Dendritic cell treated with granulocyte-macrophage colony-stimulating factor and Interleukin-4, amounts not matched to agents 40 ng/mL and 50 ng/mL, for 4 days (primary cell): ENCODE measurements at regions of chr4 and their contacts with region 1.

Region 1: DNA sequence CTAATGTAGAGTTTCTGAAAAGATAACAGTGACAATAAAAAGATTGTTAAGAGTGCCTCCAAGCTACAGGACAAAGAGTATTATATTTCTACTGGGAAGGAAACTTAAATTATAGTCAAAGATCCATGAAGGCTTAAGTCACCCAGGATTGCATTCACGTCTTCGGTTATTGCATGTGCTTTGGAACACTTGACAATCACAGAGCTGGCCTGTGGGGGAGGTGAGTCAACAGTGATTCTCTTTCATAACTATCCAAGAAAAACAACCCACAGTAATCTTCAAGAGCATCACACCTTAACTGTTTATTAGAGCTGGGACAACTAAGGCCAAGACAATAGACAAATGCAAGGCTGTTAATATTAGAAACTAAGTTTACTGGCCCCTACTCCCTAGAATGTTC is 40.3 kb downstream of the PDGFC start:
- H3K4me3 Mint-ChIP-seq: no peak overlapping the region
- H3K27ac Mint-ChIP-seq: no peak overlapping the region
- H3K4me1 Mint-ChIP-seq: peaks cover 5% of the 10 kb centered on the region
- H3K27me3 Mint-ChIP-seq: no peaks in the 10 kb centered on the region

Region 2: GRCh38 chr4:156915221-156915620 is 16.0 kb before region 1 on chr4:
- intact Hi-C with region 1: loop called (anchors 1 kb)
- H3K4me3 Mint-ChIP-seq: peak overlapping the region; percentile 60
- H3K27ac Mint-ChIP-seq: peak overlapping the region; percentile 84
- H3K4me1 Mint-ChIP-seq: peaks cover 48% of the 10 kb centered on the region
- H3K27me3 Mint-ChIP-seq: no peaks in the 10 kb centered on the region